Adrenal gland (tissue), 19 donors: ENCODE measurements at regions of chr1 and their contacts with region 1.

Region 1: DNA sequence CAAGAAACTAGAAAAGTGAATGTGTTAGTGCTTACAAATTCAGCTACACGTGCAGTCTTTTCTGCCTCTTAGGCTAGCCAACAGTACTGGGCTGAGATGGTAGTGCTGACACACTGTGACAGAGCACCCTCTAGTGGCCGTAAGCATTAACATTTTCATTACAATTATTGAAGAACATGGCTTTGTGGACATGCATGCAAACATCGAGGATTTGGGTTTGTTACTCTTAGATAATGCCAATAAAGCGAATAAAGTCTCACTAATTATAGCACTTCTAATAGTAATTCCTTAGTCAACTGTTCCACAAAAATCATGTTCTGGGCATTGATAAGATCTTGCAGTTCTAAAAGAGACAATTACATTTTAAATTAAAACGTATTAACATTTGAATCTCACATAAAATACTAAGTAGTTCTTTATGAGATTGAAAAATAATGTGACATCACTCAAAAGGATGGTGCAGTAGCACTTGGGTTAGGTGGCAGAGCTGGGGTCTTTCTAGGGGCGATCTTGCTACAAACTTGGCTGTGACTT is 47.1 kb downstream of the MYSM1 start:
- DNase-seq: peak; percentile 60 to 88 (median 65)
- H3K4me3 ChIP-seq: no peak overlapping the region
- H3K27ac ChIP-seq: no peak overlapping the region
- H3K4me1 ChIP-seq: peaks cover 0 to 4% of the 10 kb centered on the region in 2 donors
- H3K27me3 ChIP-seq: no peaks in the 10 kb centered on the region
- CTCF ChIP-seq: peak; percentile 83 to 92 (median 88)
- POLR2A ChIP-seq: no peak

Region 2: DNA sequence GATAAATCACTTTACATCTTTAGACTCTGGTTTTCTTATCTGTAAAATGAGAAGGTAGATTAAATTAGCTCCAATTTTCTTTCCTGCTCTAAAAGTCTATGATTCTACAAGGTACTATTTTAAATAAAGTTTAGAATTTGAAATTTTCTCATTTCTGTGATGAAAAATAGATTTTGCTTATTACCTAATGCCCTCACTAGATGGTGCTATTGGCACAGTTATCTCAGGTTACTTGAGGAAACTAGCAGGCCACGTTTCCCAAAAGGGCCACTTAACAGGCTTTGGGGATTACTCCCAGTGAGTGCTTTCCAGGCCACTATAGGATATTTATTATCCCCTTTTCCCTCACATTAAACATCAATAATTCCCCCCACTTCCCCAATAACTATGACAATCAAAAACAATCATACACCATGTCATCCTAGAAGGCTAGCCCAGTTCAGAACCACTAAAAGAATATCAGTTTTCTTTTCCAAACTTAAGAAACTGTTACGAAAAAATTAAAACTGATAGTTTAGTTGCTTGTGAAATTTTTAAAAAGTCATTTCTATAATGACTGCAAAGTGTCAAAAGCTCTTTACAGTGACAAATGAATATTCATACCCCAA is 136.8 kb before region 1 on chr1:
- intact Hi-C with region 1: loop called (anchors 5 to 10 kb)
- DNase-seq: peak; percentile 39 to 71 (median 48)
- H3K4me3 ChIP-seq: no peak overlapping the region
- H3K27ac ChIP-seq: no peak overlapping the region
- H3K4me1 ChIP-seq: no peaks in the 10 kb centered on the region
- H3K27me3 ChIP-seq: no peaks in the 10 kb centered on the region
- CTCF ChIP-seq: peak; percentile 38 to 87 (median 78)
- POLR2A ChIP-seq: no peak

Region 3: GRCh38 chr1:58546520-58547308 is 106.0 kb before region 1 on chr1 and contains the start of gene OMA1:
- intact Hi-C with region 1: loop called in 1 of 2 experiments (anchors 10 kb)
- DNase-seq: peak; percentile 97 to 99 (median 98)
- H3K4me3 ChIP-seq: peak within 1 kb of the TSS in 3 of 4 donors; percentile 5 to 83 (median 79)
- H3K27ac ChIP-seq: peak within 1 kb of the TSS; percentile 95 to 100 (median 99)
- H3K4me1 ChIP-seq: peaks cover 9 to 13% of the 10 kb centered on the region in 2 donors
- H3K27me3 ChIP-seq: no peaks in the 10 kb centered on the region
- CTCF ChIP-seq: peak; percentile 96 to 99 (median 98)
- POLR2A ChIP-seq: peak; percentile 85 to 93
- total RNA-seq, gene OMA1: 16.2 to 43.5 (median 31.4) TPM